ENCODE measurements at regions of chr2 and their contacts with region 1.

Region 1: DNA sequence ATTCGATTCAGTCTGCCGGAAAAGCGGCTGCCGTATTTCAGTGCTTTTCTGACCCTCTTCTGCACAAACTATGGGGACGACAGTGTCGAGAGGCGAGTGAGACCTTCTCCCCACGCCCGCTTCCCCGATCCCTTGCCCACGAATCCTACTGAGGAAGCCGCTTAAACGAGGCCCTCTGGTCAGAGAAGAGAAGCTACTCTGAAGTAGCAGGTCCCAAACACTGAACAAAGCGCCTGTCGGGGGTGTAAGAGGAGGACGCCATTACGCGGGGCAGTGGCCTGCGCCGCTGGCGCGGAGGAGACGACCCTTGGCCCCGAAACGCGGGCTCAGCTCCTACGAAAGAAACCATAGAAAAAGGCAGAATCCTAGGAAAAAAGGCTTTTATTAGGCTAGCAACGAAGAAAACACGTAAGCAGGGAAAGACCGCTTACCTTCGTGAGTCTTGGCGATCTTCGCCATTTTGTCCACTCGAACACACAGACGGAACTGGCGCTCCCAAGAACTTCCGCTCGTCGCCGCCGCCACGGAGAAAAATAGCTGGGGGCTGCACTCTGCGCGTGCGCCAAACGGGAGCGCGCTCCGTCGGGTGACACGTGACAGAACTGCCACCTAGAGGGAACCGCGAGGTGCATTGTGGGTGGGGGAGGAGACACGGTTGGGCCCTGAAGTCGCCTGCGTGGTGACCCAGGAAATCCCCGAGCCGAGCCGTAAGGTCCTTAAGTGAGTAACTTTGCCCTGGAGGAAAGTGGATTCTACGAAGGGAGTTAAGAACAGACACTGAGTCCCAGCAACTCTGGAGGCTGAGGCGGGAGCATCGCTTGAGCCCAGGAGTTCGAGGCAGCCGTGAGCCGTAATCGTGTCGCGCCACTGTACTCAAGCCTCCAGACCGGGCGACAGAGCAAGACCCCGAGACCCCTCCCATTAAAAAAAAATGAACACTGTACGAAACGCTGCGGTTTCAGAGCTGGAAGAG is at the start of gene SF3B1:
- DNase-seq: peak; percentile 98 to 99
- ATAC-seq: peak; percentile 97 to 99 (median 99)
- H3K4me3 ChIP-seq: peak within 1 kb of the TSS; percentile 69 to 100 (median 88)
- H3K27ac ChIP-seq: peak within 1 kb of the TSS; percentile 90 to 99 (median 96)
- H3K4me1 ChIP-seq: peaks cover 11 to 52% (median 48%) of the 10 kb centered on the region in 9 donors
- H3K27me3 ChIP-seq: no peaks in the 10 kb centered on the region
- CTCF ChIP-seq: no peak
- total RNA-seq, gene SF3B1: 132 to 162 (median 151) TPM

Region 2: DNA sequence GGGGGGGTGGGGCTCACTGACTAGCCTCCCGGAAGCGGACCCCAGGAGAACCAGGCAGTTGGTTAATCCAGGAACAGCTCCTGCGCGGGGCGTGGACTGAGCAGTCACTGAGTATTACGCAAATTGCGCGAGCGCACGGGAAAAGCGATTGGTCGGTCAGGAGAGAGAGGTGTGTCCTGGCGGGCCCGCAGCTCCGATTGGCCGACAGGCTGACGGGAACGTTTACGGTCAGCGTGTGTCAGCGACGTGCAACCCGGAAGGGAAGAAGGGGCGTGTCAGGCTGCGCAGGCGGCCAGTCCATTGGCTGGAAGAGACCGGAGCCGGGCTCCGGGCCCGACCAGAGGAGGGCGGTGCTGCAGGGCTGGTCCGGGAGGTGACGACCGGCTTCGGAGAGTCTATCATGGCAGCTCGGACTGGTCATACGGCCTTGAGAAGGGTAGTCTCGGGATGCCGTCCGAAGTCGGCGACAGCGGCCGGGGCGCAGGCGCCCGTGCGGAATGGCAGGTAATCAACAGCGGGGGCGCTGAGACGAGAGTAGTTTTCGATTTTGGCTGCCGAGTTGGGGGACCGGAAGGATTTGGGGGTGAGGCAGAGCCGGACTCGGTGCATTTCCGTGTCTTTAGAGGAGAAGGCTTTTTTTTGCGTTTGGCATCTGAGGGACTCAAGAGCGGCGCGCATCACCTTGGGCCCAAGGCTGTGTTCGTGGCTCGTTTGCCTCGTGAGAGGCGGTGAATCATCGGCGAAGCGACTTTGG is 18.5 kb after region 1 on chr2 and contains the start of gene COQ10B:
- intact Hi-C with region 1: loop called in 7 of 10 experiments (anchors 1 to 2 kb)
- DNase-seq: peak; percentile 99
- ATAC-seq: peak; percentile 97 to 99 (median 98)
- H3K4me3 ChIP-seq: peak within 1 kb of the TSS; percentile 52 to 92 (median 74)
- H3K27ac ChIP-seq: peak within 1 kb of the TSS; percentile 83 to 100 (median 98)
- H3K4me1 ChIP-seq: peaks cover 0 to 42% (median 20%) of the 10 kb centered on the region in 9 donors
- H3K27me3 ChIP-seq: no peaks in the 10 kb centered on the region
- CTCF ChIP-seq: peak; percentile 4 to 70 (median 42)
- total RNA-seq, gene COQ10B: 25.5 to 44.1 (median 33.0) TPM

Region 3: DNA sequence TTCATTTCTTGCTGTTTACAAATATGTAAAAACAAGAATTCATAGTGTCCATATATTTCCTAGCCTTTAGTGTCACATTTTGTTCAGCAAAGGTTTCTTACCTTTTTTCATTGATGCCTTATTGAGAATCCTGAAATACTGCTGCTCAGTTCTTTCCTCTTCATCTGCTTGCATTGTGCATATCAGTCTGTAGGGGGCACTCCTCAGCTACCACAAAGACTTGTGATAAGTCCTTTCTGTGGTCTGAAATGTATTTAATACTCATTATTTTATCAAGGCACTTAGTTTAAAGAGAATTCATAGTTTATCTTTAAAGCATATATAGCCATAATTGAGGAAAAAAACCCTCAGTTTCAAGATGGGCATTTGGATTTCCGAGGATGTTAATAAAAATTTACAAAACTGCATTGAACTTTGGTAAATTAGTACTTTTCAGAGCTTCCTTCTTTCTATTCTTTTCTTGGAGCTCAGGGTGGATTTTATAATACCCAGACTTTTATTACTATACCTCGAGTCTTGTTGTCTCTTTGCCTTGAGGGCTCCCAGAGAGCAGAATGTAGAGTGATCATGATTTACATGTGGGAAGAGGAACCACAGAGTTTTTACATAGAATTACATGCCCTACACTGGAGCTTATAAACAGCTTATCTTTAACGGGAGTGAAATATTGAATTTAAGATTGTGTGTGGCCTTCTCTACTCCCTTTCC is 939.7 kb after region 1 on chr2:
- intact Hi-C with region 1: no loop called
- DNase-seq: peak in 1 of 2 donors; percentile 6
- ATAC-seq: no peak
- H3K4me3 ChIP-seq: no peak overlapping the region
- H3K27ac ChIP-seq: no peak overlapping the region
- H3K4me1 ChIP-seq: no peaks in the 10 kb centered on the region
- H3K27me3 ChIP-seq: peaks cover 0 to 14% (median 2%) of the 10 kb centered on the region in 7 donors
- CTCF ChIP-seq: peak in 8 of 9 donors; percentile 17 to 61 (median 46)

Measured in heart right ventricle (tissue), 16 donors.